Aorta (tissue), 5 donors: ENCODE measurements at regions of chr2 and their contacts with region 1.

Region 1: GRCh38 chr2:160252278-160252887 is 52.3 kb upstream of the ITGB6 start:
- DNase-seq: no peak
- ATAC-seq: peak; percentile 80
- H3K4me3 ChIP-seq: no peak overlapping the region
- H3K27ac ChIP-seq: no peak overlapping the region
- H3K4me1 ChIP-seq: peaks cover 1 to 5% of the 10 kb centered on the region in 2 donors
- H3K27me3 ChIP-seq: no peaks in the 10 kb centered on the region

Region 2: GRCh38 chr2:160994141-160995002 is 742.0 kb after region 1 on chr2:
- intact Hi-C with region 1: loop called (anchors 5 to 10 kb)
- DNase-seq: peak in 1 of 2 donors; percentile 74
- ATAC-seq: peak; percentile 89
- H3K4me3 ChIP-seq: no peak overlapping the region
- H3K27ac ChIP-seq: no peak overlapping the region
- H3K4me1 ChIP-seq: no peaks in the 10 kb centered on the region
- H3K27me3 ChIP-seq: no peaks in the 10 kb centered on the region